Astrocyte of the spinal cord (primary cell): ENCODE measurements at regions of chr3 and their contacts with region 1.

Region 1: GRCh38 chr3:139982404-139982803 is 47.4 kb downstream of the CLSTN2 start:
- DNase-seq: peak; percentile 0
- H3K4me3 ChIP-seq: no peak overlapping the region
- CTCF ChIP-seq: peak; percentile 9

Region 2: GRCh38 chr3:139751789-139752188 is 230.6 kb before region 1 on chr3:
- in situ Hi-C with region 1: no loop called
- DNase-seq: no peak
- H3K4me3 ChIP-seq: no peak overlapping the region
- CTCF ChIP-seq: no peak

Region 3: DNA sequence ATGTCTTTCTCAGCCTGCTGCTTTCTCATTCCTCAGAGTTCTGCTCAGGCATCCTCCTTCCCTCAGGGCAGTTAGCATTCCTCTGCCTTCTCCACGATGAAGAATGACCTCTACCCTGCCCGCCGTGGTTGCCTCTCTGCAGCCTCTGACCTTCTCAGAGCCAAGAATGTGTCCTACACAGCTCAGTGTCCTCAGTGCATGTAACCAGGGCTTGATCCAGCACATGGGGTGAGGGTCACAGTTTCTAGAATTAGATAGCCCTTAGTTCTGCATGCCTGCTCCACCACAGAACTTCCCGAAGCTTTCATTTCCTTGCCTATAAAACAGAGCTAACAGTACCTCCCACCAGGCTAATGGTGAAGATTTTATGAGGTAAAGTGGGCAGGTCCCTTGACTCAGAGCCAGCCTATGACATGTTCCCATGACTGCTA is 134.7 kb after region 1 on chr3:
- in situ Hi-C with region 1: no loop called
- DNase-seq: no peak
- H3K4me3 ChIP-seq: no peak overlapping the region
- CTCF ChIP-seq: no peak

Region 4: DNA sequence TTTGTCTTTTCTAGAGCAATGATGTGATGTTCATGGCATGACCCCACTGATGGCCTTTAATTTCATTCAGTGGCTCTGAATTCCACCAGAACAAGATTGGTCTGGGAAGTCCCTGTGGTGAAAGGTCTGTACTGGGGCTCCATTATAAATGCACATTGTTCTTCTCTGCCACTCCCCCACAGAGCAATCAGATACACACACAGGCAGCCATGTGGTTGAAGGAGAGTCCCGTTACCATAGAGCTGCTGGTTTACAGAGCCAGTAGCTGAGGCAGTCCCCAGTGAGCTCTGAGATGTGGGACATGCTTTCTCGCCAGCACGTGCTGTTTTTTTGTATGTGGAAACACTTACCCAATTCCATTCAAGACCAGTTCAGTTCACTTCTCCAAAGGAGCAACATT is 522.8 kb after region 1 on chr3:
- in situ Hi-C with region 1: loop called (anchors 10 kb)
- DNase-seq: peak; percentile 19
- H3K4me3 ChIP-seq: no peak overlapping the region
- CTCF ChIP-seq: no peak